ENCODE measurements at regions of chr2 and their contacts with region 1.

Region 1: GRCh38 chr2:176652300-176653182 is 383.3 kb downstream of the MTX2 start:
- DNase-seq: peak in 5 of 35 experiments; percentile 3 to 64 (median 5)
- ATAC-seq: peak in 3 of 4 experiments; percentile 46 to 50 (median 46)
- H3K4me3 ChIP-seq: no peak overlapping the region
- H3K4me3 Mint-ChIP-seq: no peak overlapping the region
- H3K27ac ChIP-seq: no peak overlapping the region
- H3K27ac Mint-ChIP-seq: peak overlapping the region in 1 of 2 donors; percentile 13
- H3K4me1 ChIP-seq: no peaks in the 10 kb centered on the region
- H3K4me1 Mint-ChIP-seq: peaks cover 10 to 14% (median 10%) of the 10 kb centered on the region in 3 donors
- H3K27me3 ChIP-seq: peaks cover 0 to 5% of the 10 kb centered on the region in 2 experiments
- H3K27me3 Mint-ChIP-seq: peaks cover 36 to 54% of the 10 kb centered on the region in 2 donors

Region 2: GRCh38 chr2:176978921-176979320 is 326.4 kb after region 1 on chr2:
- CTCF ChIA-PET with region 1: no interaction called
- POLR2A ChIA-PET with region 1: interaction called in 1 of 2 experiments, 17 read pairs
- DNase-seq: no peak
- ATAC-seq: no peak
- H3K4me3 ChIP-seq: no peak overlapping the region
- H3K4me3 Mint-ChIP-seq: no peak overlapping the region
- H3K27ac ChIP-seq: no peak overlapping the region
- H3K27ac Mint-ChIP-seq: no peak overlapping the region
- H3K4me1 ChIP-seq: no peaks in the 10 kb centered on the region
- H3K4me1 Mint-ChIP-seq: no peaks in the 10 kb centered on the region
- H3K27me3 ChIP-seq: peaks cover 0 to 3% of the 10 kb centered on the region in 2 experiments
- H3K27me3 Mint-ChIP-seq: peaks cover 6 to 10% of the 10 kb centered on the region in 2 donors